Activated CD4-positive, alpha-beta T cell treated with anti-CD3 and anti-CD28 coated beads for 36 hours (primary cell): ENCODE measurements at regions of chr5 and their contacts with region 1.

Region 1: GRCh38 chr5:43602461-43603343 is at the start of gene NNT:
- DNase-seq: peak; percentile 89
- ATAC-seq: peak; percentile 76
- H3K4me3 Mint-ChIP-seq: peak within 1 kb of the TSS; percentile 95
- H3K27ac Mint-ChIP-seq: peak within 1 kb of the TSS; percentile 93
- H3K4me1 Mint-ChIP-seq: peaks cover 29% of the 10 kb centered on the region
- H3K27me3 Mint-ChIP-seq: no peaks in the 10 kb centered on the region
- total RNA-seq, gene NNT: 55.4 to 77.5 TPM

Region 2: GRCh38 chr5:42514754-42515153 is 1087.9 kb before region 1 on chr5:
- CTCF ChIA-PET with region 1: no interaction called
- POLR2A ChIA-PET with region 1: no interaction called
- intact Hi-C with region 1: no loop called
- DNase-seq: no peak
- ATAC-seq: no peak
- H3K4me3 Mint-ChIP-seq: no peak overlapping the region
- H3K27ac Mint-ChIP-seq: no peak overlapping the region
- H3K4me1 Mint-ChIP-seq: no peaks in the 10 kb centered on the region
- H3K27me3 Mint-ChIP-seq: peaks cover 2% of the 10 kb centered on the region

Region 3: DNA sequence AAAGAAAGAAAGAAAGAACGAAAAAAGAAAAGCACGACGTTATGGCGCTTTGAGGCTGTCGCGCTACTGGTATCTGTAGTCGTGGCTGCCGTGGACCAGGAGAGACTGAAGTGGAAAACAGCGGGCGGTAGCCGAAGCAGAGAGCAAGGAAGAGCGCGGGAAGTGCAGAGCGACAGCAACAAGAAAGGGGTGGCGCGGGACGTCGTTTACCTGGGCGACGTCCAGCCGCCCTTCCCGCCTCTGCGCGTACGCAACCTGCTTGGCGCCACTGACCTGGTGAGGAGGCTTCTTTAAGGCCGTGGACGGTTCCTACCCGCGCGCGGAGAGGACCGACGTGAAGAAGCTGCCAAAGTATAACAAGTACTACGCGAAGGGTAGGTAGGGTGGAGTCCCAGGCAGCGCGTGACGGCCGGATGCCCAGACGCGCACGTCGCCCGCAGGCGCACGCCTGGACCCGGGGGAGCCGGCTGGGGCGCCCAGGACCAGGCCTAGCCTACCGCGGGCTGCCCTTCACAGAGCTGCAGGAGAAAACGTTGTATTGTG is 205.9 kb before region 1 on chr5:
- CTCF ChIA-PET with region 1: interaction called, 3 read pairs
- POLR2A ChIA-PET with region 1: no interaction called
- intact Hi-C with region 1: loop called (anchors 2 to 10 kb)
- DNase-seq: peak; percentile 82
- ATAC-seq: peak; percentile 97
- H3K4me3 Mint-ChIP-seq: peak overlapping the region; percentile 84
- H3K27ac Mint-ChIP-seq: peak overlapping the region; percentile 96
- H3K4me1 Mint-ChIP-seq: peaks cover 26% of the 10 kb centered on the region
- H3K27me3 Mint-ChIP-seq: no peaks in the 10 kb centered on the region

Region 4: DNA sequence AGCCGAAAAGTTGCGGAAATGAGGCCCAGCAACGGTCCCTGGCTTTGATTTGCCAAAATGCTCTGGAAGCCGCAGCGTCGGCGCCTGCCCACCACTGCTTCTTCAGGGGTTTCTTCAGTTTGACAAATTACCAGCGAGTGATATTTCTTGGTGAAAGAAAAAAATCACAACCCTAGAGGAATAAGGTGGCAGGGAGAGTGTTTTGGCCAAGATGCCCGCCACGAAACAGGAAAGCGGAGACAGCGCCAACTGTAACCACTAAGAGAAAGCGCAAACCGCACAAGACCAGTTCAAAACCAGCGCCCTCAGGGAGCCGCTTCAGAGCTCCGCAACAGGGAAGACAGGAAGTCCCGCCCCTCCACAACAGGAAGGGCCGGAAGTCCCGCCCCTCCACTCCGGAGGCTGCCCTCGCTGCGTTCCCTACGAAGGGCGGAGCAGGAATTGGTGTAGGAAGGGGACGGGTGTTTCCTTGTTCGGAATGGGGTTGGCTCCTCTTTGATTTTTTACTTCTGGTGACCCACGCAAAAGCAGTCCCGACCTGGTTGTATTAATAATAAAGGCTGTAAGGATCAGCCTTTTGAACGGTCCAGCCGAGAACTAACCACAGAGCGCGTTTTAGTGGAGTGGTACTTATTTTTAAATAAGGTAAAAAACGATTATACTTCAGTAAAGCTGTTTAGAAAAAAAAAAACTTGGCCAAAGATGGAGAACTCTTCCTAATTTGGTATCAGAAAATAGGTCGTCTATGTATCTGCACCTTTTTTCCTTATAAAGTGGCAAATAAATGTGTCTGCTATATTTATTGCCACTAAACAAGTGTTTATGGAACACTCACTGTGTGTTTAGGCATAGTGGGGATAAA is 87.7 kb before region 1 on chr5 and contains the start of gene C5orf34:
- CTCF ChIA-PET with region 1: no interaction called
- POLR2A ChIA-PET with region 1: interaction called, 4 read pairs
- intact Hi-C with region 1: loop called (anchors 1 kb)
- DNase-seq: peak; percentile 97
- ATAC-seq: peak; percentile 93
- H3K4me3 Mint-ChIP-seq: peak within 1 kb of the TSS; percentile 89
- H3K27ac Mint-ChIP-seq: peak within 1 kb of the TSS; percentile 99
- H3K4me1 Mint-ChIP-seq: peaks cover 23% of the 10 kb centered on the region
- H3K27me3 Mint-ChIP-seq: no peaks in the 10 kb centered on the region
- total RNA-seq, gene C5orf34: 14.4 to 16.8 TPM

Region 5: DNA sequence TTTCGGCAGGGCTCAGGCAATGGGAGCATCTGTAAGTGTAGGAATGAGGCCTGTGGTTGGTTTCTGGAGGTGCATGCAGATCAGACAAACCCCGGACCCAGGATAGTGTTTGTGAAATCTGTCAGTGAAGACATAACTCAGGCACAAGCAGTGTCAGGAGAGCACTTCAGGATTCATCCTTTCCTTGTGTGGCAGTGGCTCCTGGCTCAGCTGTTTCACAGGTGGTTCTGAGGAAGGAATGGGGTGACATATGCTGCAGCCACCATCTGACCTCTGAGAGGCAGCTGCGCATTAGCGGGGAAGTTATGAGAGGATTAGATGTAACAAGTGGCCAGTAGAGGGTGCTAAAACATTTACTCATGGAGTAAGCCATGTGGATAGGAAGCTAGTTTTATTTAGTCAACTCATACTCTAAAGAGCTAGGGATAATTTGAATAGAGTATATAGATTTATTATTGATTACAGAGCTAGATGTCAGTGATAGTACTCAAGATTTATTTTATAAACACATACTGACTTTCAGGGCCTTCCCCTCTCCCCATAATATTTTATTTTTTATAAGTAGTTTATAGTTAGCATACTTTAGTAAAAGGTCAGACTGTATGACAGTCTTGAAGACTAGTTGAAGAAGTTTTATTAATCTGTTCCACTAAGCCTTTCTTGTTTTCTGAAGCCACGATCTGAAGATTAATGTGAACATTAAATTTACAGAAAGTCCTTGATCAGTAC is 28.6 kb after region 1 on chr5:
- CTCF ChIA-PET with region 1: interaction called, 17 read pairs
- POLR2A ChIA-PET with region 1: interaction called, 3 read pairs
- intact Hi-C with region 1: no loop called
- DNase-seq: peak; percentile 45
- ATAC-seq: peak; percentile 95
- H3K4me3 Mint-ChIP-seq: no peak overlapping the region
- H3K27ac Mint-ChIP-seq: no peak overlapping the region
- H3K4me1 Mint-ChIP-seq: peaks cover 4% of the 10 kb centered on the region
- H3K27me3 Mint-ChIP-seq: no peaks in the 10 kb centered on the region

Region 6: GRCh38 chr5:44808435-44809214 is 1205.9 kb after region 1 on chr5 and contains the start of gene MRPS30:
- CTCF ChIA-PET with region 1: no interaction called
- POLR2A ChIA-PET with region 1: no interaction called
- intact Hi-C with region 1: loop called (anchors 2 to 5 kb)
- DNase-seq: peak; percentile 93
- ATAC-seq: peak; percentile 96
- H3K4me3 Mint-ChIP-seq: peak within 1 kb of the TSS; percentile 91
- H3K27ac Mint-ChIP-seq: peak within 1 kb of the TSS; percentile 98
- H3K4me1 Mint-ChIP-seq: peaks cover 27% of the 10 kb centered on the region
- H3K27me3 Mint-ChIP-seq: no peaks in the 10 kb centered on the region
- total RNA-seq, gene MRPS30: 59.7 to 73.3 TPM